Activated naive CD4-positive, alpha-beta T cell treated with anti-CD3 and anti-CD28 coated beads for 36 hours (primary cell): ENCODE measurements at regions of chr12 and their contacts with region 1.

Region 1: GRCh38 chr12:92570056-92570753 is 132.6 kb upstream of the PLEKHG7 start:
- DNase-seq: peak; percentile 67
- H3K4me3 Mint-ChIP-seq: no peak overlapping the region
- H3K27ac Mint-ChIP-seq: no peak overlapping the region
- H3K4me1 Mint-ChIP-seq: peaks cover 32% of the 10 kb centered on the region
- H3K27me3 Mint-ChIP-seq: no peaks in the 10 kb centered on the region

Region 2: GRCh38 chr12:91382081-91382543 is 1188.1 kb before region 1 on chr12:
- CTCF ChIA-PET with region 1: interaction called, 7 read pairs
- intact Hi-C with region 1: loop called (anchors 1 kb)
- DNase-seq: peak; percentile 92
- H3K4me3 Mint-ChIP-seq: peak overlapping the region; percentile 76
- H3K27ac Mint-ChIP-seq: no peak overlapping the region
- H3K4me1 Mint-ChIP-seq: peaks cover 5% of the 10 kb centered on the region
- H3K27me3 Mint-ChIP-seq: no peaks in the 10 kb centered on the region

Region 3: DNA sequence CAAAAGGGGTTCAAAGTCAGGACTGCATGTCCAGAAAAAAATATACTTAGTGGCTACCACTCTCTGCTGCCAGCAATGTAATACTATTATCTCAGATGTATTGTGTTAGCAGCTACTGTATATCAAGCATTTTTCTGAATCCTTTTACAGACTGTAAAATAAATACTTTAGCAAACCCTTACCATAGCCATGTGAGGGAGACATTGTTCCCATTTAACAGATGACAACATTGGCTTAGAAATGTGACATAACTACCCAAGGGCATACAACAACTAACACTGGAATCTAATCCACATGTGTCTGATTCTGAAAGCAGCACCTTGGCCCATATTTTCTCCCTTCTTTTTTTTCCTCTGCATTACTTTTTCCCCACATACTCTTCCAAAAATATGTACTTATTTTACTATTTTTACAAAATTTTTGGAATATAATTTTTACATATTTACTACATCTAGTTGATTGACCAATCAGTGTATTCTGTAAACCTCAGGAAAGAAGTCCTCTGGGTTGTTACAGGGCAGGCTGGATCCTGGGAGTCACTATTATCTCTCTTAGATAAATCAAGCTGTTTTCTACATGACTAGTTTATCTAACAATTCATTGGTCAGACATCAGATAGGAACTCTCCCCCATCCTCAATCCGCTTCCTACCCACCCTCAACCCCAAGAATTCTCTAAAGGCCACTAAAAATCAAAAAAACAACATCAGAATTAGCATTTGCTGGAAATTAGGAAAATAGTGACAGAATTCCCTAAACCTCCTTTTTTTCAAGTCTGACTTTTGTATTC is 578.6 kb before region 1 on chr12:
- CTCF ChIA-PET with region 1: no interaction called
- intact Hi-C with region 1: loop called (anchors 1 kb)
- DNase-seq: no peak
- H3K4me3 Mint-ChIP-seq: no peak overlapping the region
- H3K27ac Mint-ChIP-seq: no peak overlapping the region
- H3K4me1 Mint-ChIP-seq: peaks cover 61% of the 10 kb centered on the region
- H3K27me3 Mint-ChIP-seq: no peaks in the 10 kb centered on the region

Region 4: GRCh38 chr12:92338671-92339070 is 231.5 kb before region 1 on chr12:
- CTCF ChIA-PET with region 1: no interaction called
- intact Hi-C with region 1: loop called (anchors 5 kb)
- DNase-seq: no peak
- H3K4me3 Mint-ChIP-seq: no peak overlapping the region
- H3K27ac Mint-ChIP-seq: no peak overlapping the region
- H3K4me1 Mint-ChIP-seq: peaks cover 29% of the 10 kb centered on the region
- H3K27me3 Mint-ChIP-seq: no peaks in the 10 kb centered on the region

Region 5: DNA sequence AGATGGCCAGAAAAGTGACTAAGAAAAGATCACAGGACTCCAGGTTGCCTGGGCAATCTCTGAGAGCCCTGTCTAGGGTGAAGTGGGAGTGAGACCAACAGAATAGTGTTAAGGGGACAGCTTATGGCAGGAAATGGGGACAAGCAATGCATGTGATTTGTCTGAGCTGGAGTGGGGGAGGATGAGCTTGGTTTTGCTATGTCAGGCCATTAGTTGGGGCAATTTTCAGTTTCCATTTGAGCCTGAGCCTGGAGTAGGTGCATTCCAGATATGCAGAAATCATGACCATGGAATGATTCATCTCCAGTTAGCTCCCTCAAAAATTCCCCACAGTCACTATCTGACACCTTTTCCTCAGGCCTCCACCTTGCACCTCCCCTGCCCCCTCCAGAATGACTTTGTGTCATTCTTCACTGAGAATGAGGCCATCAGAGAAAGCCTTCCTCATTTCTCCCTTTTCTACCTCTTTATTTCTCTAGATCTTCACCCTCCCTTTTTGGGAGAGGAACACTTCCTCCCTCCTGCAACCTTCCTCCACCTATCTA is 18.3 kb before region 1 on chr12:
- CTCF ChIA-PET with region 1: interaction called, 14 read pairs
- intact Hi-C with region 1: no loop called
- DNase-seq: peak; percentile 83
- H3K4me3 Mint-ChIP-seq: no peak overlapping the region
- H3K27ac Mint-ChIP-seq: no peak overlapping the region
- H3K4me1 Mint-ChIP-seq: peaks cover 38% of the 10 kb centered on the region
- H3K27me3 Mint-ChIP-seq: no peaks in the 10 kb centered on the region

Region 6: DNA sequence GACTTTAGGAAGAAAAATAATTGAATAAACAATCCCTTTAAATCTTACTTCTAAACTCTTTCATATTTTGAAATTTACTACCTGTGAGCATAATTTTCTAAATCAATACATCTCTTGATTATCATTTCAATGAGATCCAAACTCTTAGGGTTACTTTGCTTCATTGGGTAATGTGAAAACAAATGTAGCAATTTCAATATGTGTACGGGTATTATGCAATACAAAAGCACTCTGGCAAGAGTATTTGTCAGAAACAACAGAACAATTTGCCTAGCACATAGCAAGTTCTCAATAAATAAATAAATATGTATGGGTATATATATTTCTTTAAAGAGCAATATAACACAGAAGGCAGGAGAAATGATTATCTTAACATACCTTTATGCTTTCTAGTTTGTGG is 209.7 kb after region 1 on chr12:
- CTCF ChIA-PET with region 1: no interaction called
- intact Hi-C with region 1: no loop called
- DNase-seq: no peak
- H3K4me3 Mint-ChIP-seq: no peak overlapping the region
- H3K27ac Mint-ChIP-seq: no peak overlapping the region
- H3K4me1 Mint-ChIP-seq: peaks cover 2% of the 10 kb centered on the region
- H3K27me3 Mint-ChIP-seq: no peaks in the 10 kb centered on the region